Caco-2 (cell line): ENCODE measurements at regions of chr7 and their contacts with region 1.

Region 1: GRCh38 chr7:5750026-5750653 is 31.3 kb downstream of the RNF216 start:
- DNase-seq: peak in 1 of 2 experiments; percentile 62
- H3K4me3 ChIP-seq: no peak overlapping the region
- H3K4me3 Mint-ChIP-seq: no peak overlapping the region
- H3K27ac Mint-ChIP-seq: peak overlapping the region; percentile 64
- H3K4me1 ChIP-seq: peaks cover 35% of the 10 kb centered on the region
- H3K4me1 Mint-ChIP-seq: peaks cover 11% of the 10 kb centered on the region
- H3K27me3 ChIP-seq: no peaks in the 10 kb centered on the region
- H3K27me3 Mint-ChIP-seq: no peaks in the 10 kb centered on the region
- CTCF ChIP-seq: no peak

Region 2: DNA sequence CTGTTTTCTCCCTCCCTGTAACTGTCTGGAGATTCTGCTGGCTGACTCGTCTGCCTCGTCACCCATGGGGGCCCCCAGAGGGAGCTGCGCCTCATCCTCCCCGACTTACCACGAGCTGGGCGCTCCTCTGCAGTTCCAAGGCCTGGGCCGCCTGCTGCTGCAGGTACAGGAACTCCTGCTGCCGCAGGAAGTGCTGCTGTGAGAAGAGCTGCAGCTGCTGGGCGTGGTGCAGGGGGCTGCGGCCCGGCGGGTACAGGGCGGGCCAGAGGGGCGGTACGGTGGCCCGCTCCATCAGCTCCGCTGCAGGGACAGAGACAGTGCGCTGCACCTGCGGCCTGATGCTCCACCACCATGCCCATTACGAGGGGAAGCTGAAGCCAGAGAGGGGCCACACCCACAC is 374.2 kb before region 1 on chr7:
- CTCF ChIA-PET with region 1: no interaction called
- POLR2A ChIA-PET with region 1: no interaction called
- intact Hi-C with region 1: no loop called
- DNase-seq: no peak
- H3K4me3 ChIP-seq: no peak overlapping the region
- H3K4me3 Mint-ChIP-seq: no peak overlapping the region
- H3K27ac Mint-ChIP-seq: peak overlapping the region; percentile 30
- H3K4me1 ChIP-seq: no peaks in the 10 kb centered on the region
- H3K4me1 Mint-ChIP-seq: no peaks in the 10 kb centered on the region
- H3K27me3 ChIP-seq: no peaks in the 10 kb centered on the region
- H3K27me3 Mint-ChIP-seq: no peaks in the 10 kb centered on the region
- CTCF ChIP-seq: no peak

Region 3: GRCh38 chr7:5822742-5823503 is 72.8 kb after region 1 on chr7:
- CTCF ChIA-PET with region 1: no interaction called
- POLR2A ChIA-PET with region 1: interaction called, 15 read pairs
- intact Hi-C with region 1: no loop called
- DNase-seq: peak; percentile 95
- H3K4me3 ChIP-seq: peak overlapping the region; percentile 53
- H3K4me3 Mint-ChIP-seq: peak overlapping the region; percentile 83
- H3K27ac Mint-ChIP-seq: peak overlapping the region; percentile 58
- H3K4me1 ChIP-seq: no peaks in the 10 kb centered on the region
- H3K4me1 Mint-ChIP-seq: no peaks in the 10 kb centered on the region
- H3K27me3 ChIP-seq: no peaks in the 10 kb centered on the region
- H3K27me3 Mint-ChIP-seq: peaks cover 2% of the 10 kb centered on the region
- CTCF ChIP-seq: peak in 1 of 2 experiments; percentile 0